Kidney (tissue), 22 donors: ENCODE measurements at regions of chr14 and their contacts with region 1.

Region 1: DNA sequence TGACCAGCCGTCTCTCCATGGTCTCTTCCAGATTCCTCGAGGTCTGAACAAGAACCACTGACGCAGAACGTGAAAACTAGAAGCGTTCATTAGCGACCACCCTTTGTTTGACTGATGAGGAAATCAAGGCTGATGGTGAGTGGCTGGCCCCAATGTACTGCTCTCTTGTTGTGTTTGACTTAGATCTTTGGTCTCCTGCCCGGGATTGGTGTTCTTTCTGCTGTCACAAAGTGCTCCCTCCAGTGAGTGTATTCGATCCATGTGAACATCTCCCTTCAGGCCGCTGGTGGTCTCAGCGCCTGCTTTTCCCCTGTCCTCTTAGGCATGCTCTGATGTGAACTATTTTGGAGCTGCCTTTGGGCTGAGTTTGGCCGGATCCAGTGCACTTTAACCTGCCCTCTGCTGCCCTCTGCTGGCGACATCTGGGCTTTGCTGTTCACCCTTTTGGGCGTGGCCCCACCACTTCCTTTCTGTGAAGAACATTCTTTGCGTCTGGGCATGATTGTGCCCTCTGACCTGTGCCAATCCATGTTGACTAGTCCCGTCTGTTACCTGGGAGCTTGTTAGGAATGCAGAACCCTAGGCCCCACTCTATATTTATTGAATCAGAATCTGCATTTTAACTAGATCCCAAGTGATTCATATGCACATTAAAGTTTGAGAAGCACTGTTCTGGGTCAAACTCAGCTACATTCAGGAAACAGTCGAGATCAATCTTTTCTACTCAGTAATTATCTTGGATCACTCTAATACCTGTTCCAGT is 279.2 kb downstream of the TTC6 start:
- DNase-seq: peak; percentile 81 to 86 (median 83)
- H3K4me3 ChIP-seq: no peak overlapping the region
- H3K27ac ChIP-seq: no peak overlapping the region
- H3K4me1 ChIP-seq: no peaks in the 10 kb centered on the region
- H3K27me3 ChIP-seq: no peaks in the 10 kb centered on the region
- CTCF ChIP-seq: peak; percentile 79

Region 2: GRCh38 chr14:37246427-37246914 is 628.1 kb before region 1 on chr14:
- intact Hi-C with region 1: loop called (anchors 10 kb)
- DNase-seq: peak in 2 of 5 donors; percentile 55 to 75
- H3K4me3 ChIP-seq: no peak overlapping the region
- H3K27ac ChIP-seq: no peak overlapping the region
- H3K4me1 ChIP-seq: no peaks in the 10 kb centered on the region
- H3K27me3 ChIP-seq: no peaks in the 10 kb centered on the region
- CTCF ChIP-seq: peak; percentile 63

Region 3: GRCh38 chr14:38248321-38249050 is 373.9 kb after region 1 on chr14:
- intact Hi-C with region 1: no loop called
- DNase-seq: no peak
- H3K4me3 ChIP-seq: no peak overlapping the region
- H3K27ac ChIP-seq: no peak overlapping the region
- H3K4me1 ChIP-seq: no peaks in the 10 kb centered on the region
- H3K27me3 ChIP-seq: no peaks in the 10 kb centered on the region
- CTCF ChIP-seq: no peak